ENCODE measurements at regions of chr3 and their contacts with region 1.

Region 1: DNA sequence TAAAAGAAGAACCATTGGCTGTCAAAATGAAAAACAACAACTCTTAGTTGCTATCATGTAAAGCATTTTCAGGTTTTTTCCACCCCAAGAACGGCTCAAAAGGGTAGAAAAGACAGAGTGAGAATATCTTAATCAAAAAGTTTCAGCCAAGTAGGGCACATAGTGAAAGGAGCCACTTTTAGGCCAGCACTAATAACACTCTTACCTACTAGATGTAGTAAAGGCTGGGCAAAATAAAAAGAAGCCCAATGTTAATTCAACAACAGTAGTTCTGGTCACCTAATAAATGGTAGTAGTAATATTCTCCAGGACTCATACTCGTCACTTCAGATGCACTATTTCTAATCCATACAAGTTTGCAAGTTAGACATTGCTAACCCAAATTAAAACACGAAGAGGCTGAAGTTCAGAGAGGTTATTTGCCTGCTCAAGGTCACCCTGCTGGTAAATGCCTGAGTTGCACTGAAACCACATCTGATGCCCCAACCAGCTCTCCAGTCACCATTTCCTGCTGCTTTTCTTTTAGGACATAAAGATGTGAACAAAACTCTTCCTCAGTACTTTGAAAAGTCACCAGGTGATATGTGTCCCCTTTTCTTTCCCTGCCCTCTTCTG is 7.5 kb downstream of the GOLIM4 start:
- DNase-seq: no peak
- H3K4me3 ChIP-seq: no peak overlapping the region
- CTCF ChIP-seq: no peak

Region 2: GRCh38 chr3:168071591-168072322 is 16.5 kb before region 1 on chr3:
- CTCF ChIA-PET with region 1: interaction called, 28 read pairs
- POLR2A ChIA-PET with region 1: no interaction called
- DNase-seq: peak; percentile 83
- H3K4me3 ChIP-seq: no peak overlapping the region
- CTCF ChIP-seq: no peak

Measured in AG04449 (cell line).